CD8-positive, alpha-beta memory T cell (primary cell): ENCODE measurements at regions of chr5 and their contacts with region 1.

Region 1: GRCh38 chr5:139670369-139671095 is 22.4 kb downstream of the CXXC5 start:
- DNase-seq: peak in 1 of 5 donors; percentile 62
- H3K4me3 ChIP-seq: peak overlapping the region; percentile 66
- H3K4me3 Mint-ChIP-seq: peak overlapping the region; percentile 86 to 94 (median 91)
- H3K27ac ChIP-seq: peak overlapping the region; percentile 66
- H3K27ac Mint-ChIP-seq: peak overlapping the region; percentile 91 to 99 (median 96)
- H3K4me1 ChIP-seq: peaks cover 46% of the 10 kb centered on the region
- H3K4me1 Mint-ChIP-seq: peaks cover 54 to 57% (median 55%) of the 10 kb centered on the region in 3 donors
- H3K27me3 ChIP-seq: no peaks in the 10 kb centered on the region
- H3K27me3 Mint-ChIP-seq: no peaks in the 10 kb centered on the region

Region 2: GRCh38 chr5:139633295-139634027 is 37.1 kb before region 1 on chr5:
- CTCF ChIA-PET with region 1: interaction called, 87 read pairs
- POLR2A ChIA-PET with region 1: interaction called, 12 read pairs
- DNase-seq: peak; percentile 56 to 73 (median 63)
- H3K4me3 ChIP-seq: no peak overlapping the region
- H3K4me3 Mint-ChIP-seq: peak overlapping the region in 2 of 7 donors; percentile 1 to 2
- H3K27ac ChIP-seq: no peak overlapping the region
- H3K27ac Mint-ChIP-seq: peak overlapping the region in 7 of 8 donors; percentile 6 to 83 (median 68)
- H3K4me1 ChIP-seq: peaks cover 35% of the 10 kb centered on the region
- H3K4me1 Mint-ChIP-seq: peaks cover 36 to 47% (median 43%) of the 10 kb centered on the region in 3 donors
- H3K27me3 ChIP-seq: no peaks in the 10 kb centered on the region
- H3K27me3 Mint-ChIP-seq: no peaks in the 10 kb centered on the region

Region 3: GRCh38 chr5:139651853-139652787 is 18.4 kb before region 1 on chr5:
- CTCF ChIA-PET with region 1: interaction called, 20 read pairs
- POLR2A ChIA-PET with region 1: interaction called, 6 read pairs
- DNase-seq: peak; percentile 50 to 82 (median 72)
- H3K4me3 ChIP-seq: peak overlapping the region; percentile 38
- H3K4me3 Mint-ChIP-seq: peak overlapping the region; percentile 15 to 96 (median 70)
- H3K27ac ChIP-seq: no peak overlapping the region
- H3K27ac Mint-ChIP-seq: peak overlapping the region; percentile 12 to 91 (median 78)
- H3K4me1 ChIP-seq: peaks cover 40% of the 10 kb centered on the region
- H3K4me1 Mint-ChIP-seq: peaks cover 36 to 57% (median 48%) of the 10 kb centered on the region in 3 donors
- H3K27me3 ChIP-seq: peaks cover 39% of the 10 kb centered on the region
- H3K27me3 Mint-ChIP-seq: peaks cover 11 to 26% of the 10 kb centered on the region in 2 donors

Region 4: DNA sequence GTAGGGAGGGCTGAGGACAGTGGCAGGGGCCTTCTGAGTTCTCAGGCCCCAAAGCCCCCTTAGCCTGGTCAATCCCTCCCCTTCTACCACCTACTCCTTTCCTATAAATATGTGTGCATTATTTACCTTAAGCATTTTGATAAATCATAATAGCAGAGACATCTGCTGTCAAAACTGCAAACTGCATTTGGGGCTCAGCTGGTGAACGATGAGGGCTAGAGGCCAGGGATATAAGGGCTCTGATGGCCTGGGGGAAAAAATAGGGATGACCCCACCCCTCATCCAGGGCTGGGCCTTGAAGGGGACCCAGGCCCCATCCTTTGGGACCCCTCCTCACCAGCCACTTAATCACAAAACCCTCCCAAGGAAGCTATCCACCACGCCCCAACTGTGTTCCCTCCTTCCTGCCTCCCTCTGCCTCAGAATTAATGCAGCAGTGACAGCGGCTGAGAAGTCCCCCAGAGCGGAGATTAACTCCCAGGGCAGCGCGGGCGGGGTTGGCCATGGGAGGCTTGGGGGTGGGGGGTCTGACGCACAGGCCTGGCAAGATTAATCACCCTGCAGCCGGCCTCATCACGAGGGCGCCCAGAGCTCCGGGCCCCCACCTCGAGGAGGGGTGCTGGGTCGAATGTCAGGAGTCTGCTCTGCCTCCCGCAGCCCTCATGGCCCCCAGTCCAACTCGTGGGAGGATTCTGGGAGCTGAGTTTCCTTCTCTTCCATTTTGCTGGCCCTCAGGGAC is 19.7 kb after region 1 on chr5:
- CTCF ChIA-PET with region 1: interaction called, 29 read pairs
- POLR2A ChIA-PET with region 1: no interaction called
- DNase-seq: peak in 1 of 5 donors; percentile 24
- H3K4me3 ChIP-seq: no peak overlapping the region
- H3K4me3 Mint-ChIP-seq: no peak overlapping the region
- H3K27ac ChIP-seq: no peak overlapping the region
- H3K27ac Mint-ChIP-seq: peak overlapping the region in 5 of 8 donors; percentile 15 to 72 (median 68)
- H3K4me1 ChIP-seq: no peaks in the 10 kb centered on the region
- H3K4me1 Mint-ChIP-seq: peaks cover 0 to 9% (median 4%) of the 10 kb centered on the region in 3 donors
- H3K27me3 ChIP-seq: no peaks in the 10 kb centered on the region
- H3K27me3 Mint-ChIP-seq: no peaks in the 10 kb centered on the region